ENCODE measurements at regions of chr9 and their contacts with region 1.

Region 1: GRCh38 chr9:133170716-133171559 is 7.2 kb upstream of the GBGT1 start:
- DNase-seq: no peak
- ATAC-seq: no peak
- H3K4me3 ChIP-seq: no peak overlapping the region
- H3K27ac ChIP-seq: no peak overlapping the region
- H3K4me1 ChIP-seq: no peaks in the 10 kb centered on the region
- H3K27me3 ChIP-seq: peaks cover 0 to 5% (median 0%) of the 10 kb centered on the region in 3 donors
- CTCF ChIP-seq: no peak
- POLR2A ChIP-seq: no peak

Region 2: DNA sequence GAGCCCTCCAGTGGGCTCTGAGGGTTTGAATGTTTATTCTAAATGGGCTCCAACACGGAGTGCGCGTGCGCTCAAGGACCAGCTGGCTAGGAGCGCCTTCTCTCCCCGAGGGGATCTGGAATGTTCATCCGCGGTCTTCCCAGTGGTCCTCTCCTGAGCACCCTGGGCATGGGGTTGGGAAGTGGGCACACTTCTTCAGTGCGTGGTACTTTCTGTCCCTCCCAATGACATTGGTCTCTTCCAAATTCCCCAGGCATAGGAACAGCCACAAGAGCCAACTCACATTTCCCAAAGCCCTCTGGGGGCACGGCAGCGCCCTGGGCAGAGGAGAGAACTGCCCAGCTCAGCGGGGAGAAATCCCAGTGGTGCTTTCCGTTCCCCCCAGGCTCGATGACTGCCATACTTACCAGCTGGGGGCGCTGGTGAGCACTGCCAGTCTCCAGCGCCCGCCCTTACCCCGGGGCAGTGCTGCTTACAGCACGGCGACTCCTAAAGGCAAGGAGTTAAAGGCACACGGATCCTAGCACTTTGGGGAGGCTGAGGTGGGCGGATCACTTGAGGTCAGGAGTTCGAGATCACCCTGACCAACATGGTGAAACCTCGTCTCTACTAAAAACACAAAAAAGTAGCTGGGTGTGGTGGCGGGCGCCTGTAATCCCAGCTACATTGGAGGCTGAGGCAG is 68.1 kb after region 1 on chr9:
- in situ Hi-C with region 1: no loop called
- intact Hi-C with region 1: no loop called
- DNase-seq: no peak
- ATAC-seq: peak; percentile 9 to 17
- H3K4me3 ChIP-seq: peak overlapping the region; percentile 17 to 36 (median 26)
- H3K27ac ChIP-seq: peak overlapping the region; percentile 50 to 81 (median 66)
- H3K4me1 ChIP-seq: peaks cover 13 to 14% of the 10 kb centered on the region in 2 donors
- H3K27me3 ChIP-seq: peaks cover 7 to 18% (median 18%) of the 10 kb centered on the region in 3 donors
- CTCF ChIP-seq: peak in 4 of 5 experiments; percentile 19 to 46 (median 38)
- POLR2A ChIP-seq: no peak

Region 3: GRCh38 chr9:133485361-133486260 is 314.7 kb after region 1 on chr9:
- in situ Hi-C with region 1: loop called in 2 of 4 experiments (anchors 10 to 25 kb)
- intact Hi-C with region 1: no loop called
- DNase-seq: no peak
- ATAC-seq: no peak
- H3K4me3 ChIP-seq: no peak overlapping the region
- H3K27ac ChIP-seq: no peak overlapping the region
- H3K4me1 ChIP-seq: no peaks in the 10 kb centered on the region
- H3K27me3 ChIP-seq: no peaks in the 10 kb centered on the region
- CTCF ChIP-seq: no peak
- POLR2A ChIP-seq: no peak

Measured in gastrocnemius medialis (tissue), 4 donors.